Naive thymus-derived CD4-positive, alpha-beta T cell (primary cell): ENCODE measurements at regions of chr4 and their contacts with region 1.

Region 1: GRCh38 chr4:159077702-159078495 is 25.0 kb upstream of the RAPGEF2 start:
- DNase-seq: no peak
- ATAC-seq: peak; percentile 41
- H3K4me3 ChIP-seq: no peak overlapping the region
- H3K4me3 Mint-ChIP-seq: peak overlapping the region in 8 of 10 donors; percentile 38 to 66 (median 51)
- H3K27ac ChIP-seq: no peak overlapping the region
- H3K27ac Mint-ChIP-seq: peak overlapping the region in 2 of 9 donors; percentile 18 to 56
- H3K4me1 ChIP-seq: peaks cover 0 to 3% of the 10 kb centered on the region in 2 donors
- H3K4me1 Mint-ChIP-seq: peaks cover 0 to 21% (median 8%) of the 10 kb centered on the region in 7 donors
- H3K27me3 ChIP-seq: no peaks in the 10 kb centered on the region
- H3K27me3 Mint-ChIP-seq: peaks cover 0 to 2% (median 0%) of the 10 kb centered on the region in 5 donors

Region 2: DNA sequence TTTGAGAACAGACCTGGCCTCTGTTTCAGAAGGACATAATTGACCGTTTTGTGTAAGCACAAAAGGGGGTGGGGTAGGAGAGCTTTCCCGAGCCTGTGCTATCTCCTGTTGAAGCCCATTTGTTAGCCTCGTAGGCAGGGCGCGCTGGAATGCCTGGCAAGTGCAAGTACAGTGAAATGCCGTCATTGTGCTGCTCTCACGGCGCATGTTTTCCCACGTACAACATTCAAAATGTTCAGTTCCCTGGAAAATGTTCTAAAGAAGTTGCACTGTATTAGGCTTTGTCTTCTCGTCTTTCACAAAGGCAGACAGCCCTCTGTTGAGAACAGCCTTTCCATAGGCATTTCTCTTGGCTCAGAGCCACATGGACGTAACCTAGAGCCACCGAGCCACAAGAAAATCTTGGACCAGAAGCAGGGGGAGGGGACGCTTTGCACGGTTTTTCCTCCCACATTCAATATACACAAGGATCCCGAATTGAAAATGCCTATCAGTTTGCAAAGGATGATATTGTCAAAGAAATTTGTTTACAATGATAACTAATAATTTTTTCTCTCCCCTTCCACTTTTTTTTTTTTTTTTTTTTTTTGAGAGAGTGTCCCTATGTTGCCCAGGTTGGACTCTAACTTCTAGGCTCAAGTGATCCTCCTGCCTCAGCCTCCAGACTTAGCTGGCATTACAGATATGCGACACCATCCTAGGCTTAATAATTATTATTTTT is 29.6 kb before region 1 on chr4:
- CTCF ChIA-PET with region 1: no interaction called
- POLR2A ChIA-PET with region 1: no interaction called
- intact Hi-C with region 1: loop called in 1 of 2 experiments (anchors 1 kb)
- DNase-seq: no peak
- ATAC-seq: no peak
- H3K4me3 ChIP-seq: no peak overlapping the region
- H3K4me3 Mint-ChIP-seq: no peak overlapping the region
- H3K27ac ChIP-seq: no peak overlapping the region
- H3K27ac Mint-ChIP-seq: no peak overlapping the region
- H3K4me1 ChIP-seq: no peaks in the 10 kb centered on the region
- H3K4me1 Mint-ChIP-seq: peaks cover 0 to 38% (median 0%) of the 10 kb centered on the region in 7 donors
- H3K27me3 ChIP-seq: no peaks in the 10 kb centered on the region
- H3K27me3 Mint-ChIP-seq: peaks cover 2 to 18% (median 5%) of the 10 kb centered on the region in 5 donors

Region 3: DNA sequence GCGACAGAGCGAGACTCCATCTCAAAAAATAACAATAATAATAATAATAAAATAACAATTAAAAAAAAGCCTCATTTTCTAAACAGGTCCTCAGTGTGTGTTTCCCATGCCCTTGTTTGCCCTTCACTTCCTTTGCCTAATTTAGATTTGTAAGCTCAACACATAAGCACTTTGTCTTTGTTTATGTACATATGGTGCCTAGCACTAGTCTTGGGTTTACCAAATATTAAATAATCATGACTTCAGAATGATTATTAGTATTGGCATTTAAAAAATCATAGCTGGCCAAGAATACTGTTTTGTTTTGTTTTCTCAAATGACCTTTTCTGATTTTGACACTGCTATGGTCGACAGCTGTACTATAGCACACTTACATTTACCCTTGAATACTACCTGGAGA is 18.5 kb after region 1 on chr4:
- CTCF ChIA-PET with region 1: no interaction called
- POLR2A ChIA-PET with region 1: no interaction called
- intact Hi-C with region 1: no loop called
- DNase-seq: no peak
- ATAC-seq: no peak
- H3K4me3 ChIP-seq: no peak overlapping the region
- H3K4me3 Mint-ChIP-seq: no peak overlapping the region
- H3K27ac ChIP-seq: no peak overlapping the region
- H3K27ac Mint-ChIP-seq: no peak overlapping the region
- H3K4me1 ChIP-seq: no peaks in the 10 kb centered on the region
- H3K4me1 Mint-ChIP-seq: peaks cover 0 to 8% (median 5%) of the 10 kb centered on the region in 7 donors
- H3K27me3 ChIP-seq: no peaks in the 10 kb centered on the region
- H3K27me3 Mint-ChIP-seq: peaks cover 0 to 14% (median 0%) of the 10 kb centered on the region in 5 donors

Region 4: DNA sequence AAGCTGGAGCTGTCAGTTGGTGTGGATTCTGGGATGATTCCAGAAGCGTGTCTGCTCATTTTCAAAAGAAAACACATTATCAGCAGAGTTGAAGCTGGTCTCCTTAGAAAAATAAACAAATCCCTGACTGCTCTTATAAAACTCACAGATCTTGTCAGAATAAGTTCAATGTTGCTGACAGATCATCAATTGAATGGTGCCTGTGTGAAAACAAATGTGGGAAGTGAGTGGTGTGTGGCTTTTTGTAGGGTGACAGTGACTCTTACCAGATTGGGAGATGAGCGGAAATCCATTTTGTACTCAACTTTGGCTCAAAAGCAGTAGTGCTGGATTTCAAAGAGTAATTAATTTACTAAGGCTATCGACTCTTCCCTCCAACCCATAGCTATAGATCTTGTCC is 832.8 kb after region 1 on chr4:
- CTCF ChIA-PET with region 1: no interaction called
- POLR2A ChIA-PET with region 1: no interaction called
- intact Hi-C with region 1: no loop called
- DNase-seq: no peak
- ATAC-seq: no peak
- H3K4me3 ChIP-seq: no peak overlapping the region
- H3K4me3 Mint-ChIP-seq: no peak overlapping the region
- H3K27ac ChIP-seq: no peak overlapping the region
- H3K27ac Mint-ChIP-seq: no peak overlapping the region
- H3K4me1 ChIP-seq: no peaks in the 10 kb centered on the region
- H3K4me1 Mint-ChIP-seq: no peaks in the 10 kb centered on the region
- H3K27me3 ChIP-seq: no peaks in the 10 kb centered on the region
- H3K27me3 Mint-ChIP-seq: no peaks in the 10 kb centered on the region